IMR-90 (cell line): ENCODE measurements at regions of chr2 and their contacts with region 1.

Region 1: DNA sequence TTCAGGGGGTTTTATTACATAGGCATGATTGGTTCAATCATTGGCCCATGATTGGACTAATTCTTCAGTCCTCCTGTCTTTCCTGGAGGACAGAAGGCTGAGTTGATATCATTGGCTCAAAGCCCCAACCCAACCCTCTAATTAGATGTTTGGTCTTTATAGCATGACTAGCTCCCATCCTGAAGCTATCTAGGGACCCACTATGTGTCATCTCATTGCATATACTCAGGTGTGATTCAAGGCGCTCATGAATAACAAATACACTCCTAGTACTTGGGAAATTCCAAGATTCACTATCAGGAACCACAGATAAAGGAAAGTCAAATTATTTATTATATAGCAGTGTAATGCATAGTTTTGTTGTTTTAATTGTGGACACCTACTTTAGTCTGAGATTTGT is 24.9 kb upstream of the NBEAL1 start:
- DNase-seq: no peak
- ATAC-seq: no peak
- H3K4me3 ChIP-seq: no peak overlapping the region
- H3K27ac ChIP-seq: no peak overlapping the region
- H3K4me1 ChIP-seq: no peaks in the 10 kb centered on the region
- H3K27me3 ChIP-seq: no peaks in the 10 kb centered on the region
- CTCF ChIP-seq: no peak
- POLR2A ChIP-seq: no peak
- RAD21 ChIP-seq: no peak

Region 2: DNA sequence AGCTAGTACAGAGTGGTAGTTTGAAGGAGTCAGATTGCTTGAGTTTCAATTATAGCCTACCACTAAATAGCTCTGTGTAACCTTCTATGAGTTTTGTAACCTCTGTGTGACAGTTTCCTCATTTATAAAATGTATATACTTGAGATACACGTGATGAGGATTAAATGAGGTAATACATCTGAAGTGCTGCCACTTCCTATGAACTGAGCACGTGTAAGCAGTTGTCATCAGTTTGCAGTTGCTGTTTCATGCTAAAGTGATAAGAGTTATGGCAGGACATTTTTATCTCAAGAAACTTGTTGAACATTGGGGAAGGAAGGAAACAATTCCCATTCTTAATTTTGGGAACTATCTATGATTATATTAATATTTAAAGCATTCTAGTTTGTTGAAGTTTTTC is 39.2 kb before region 1 on chr2:
- CTCF ChIA-PET with region 1: no interaction called
- POLR2A ChIA-PET with region 1: no interaction called
- dilution Hi-C with region 1: no loop called
- in situ Hi-C with region 1: no loop called
- intact Hi-C with region 1: loop called (anchors 5 kb)
- DNase-seq: peak; percentile 43
- ATAC-seq: no peak
- H3K4me3 ChIP-seq: no peak overlapping the region
- H3K27ac ChIP-seq: no peak overlapping the region
- H3K4me1 ChIP-seq: no peaks in the 10 kb centered on the region
- H3K27me3 ChIP-seq: no peaks in the 10 kb centered on the region
- CTCF ChIP-seq: no peak
- POLR2A ChIP-seq: no peak
- RAD21 ChIP-seq: no peak